T-cell (primary cell): ENCODE measurements at regions of chr1 and their contacts with region 1.

Region 1: GRCh38 chr1:155323798-155324610 is 3.3 kb downstream of the RUSC1 start:
- DNase-seq: peak; percentile 65 to 94 (median 81)
- ATAC-seq: peak; percentile 82 to 84 (median 84)
- H3K4me3 ChIP-seq: peak overlapping the region; percentile 95 to 97
- H3K4me3 Mint-ChIP-seq: peak overlapping the region; percentile 80 to 89 (median 85)
- H3K27ac ChIP-seq: peak overlapping the region; percentile 89
- H3K27ac Mint-ChIP-seq: peak overlapping the region; percentile 76 to 85
- H3K4me1 ChIP-seq: peaks cover 5 to 45% of the 10 kb centered on the region in 2 experiments
- H3K4me1 Mint-ChIP-seq: peaks cover 32 to 39% (median 34%) of the 10 kb centered on the region in 3 donors
- H3K27me3 ChIP-seq: peaks cover 0 to 2% of the 10 kb centered on the region in 2 experiments
- H3K27me3 Mint-ChIP-seq: no peaks in the 10 kb centered on the region

Region 2: DNA sequence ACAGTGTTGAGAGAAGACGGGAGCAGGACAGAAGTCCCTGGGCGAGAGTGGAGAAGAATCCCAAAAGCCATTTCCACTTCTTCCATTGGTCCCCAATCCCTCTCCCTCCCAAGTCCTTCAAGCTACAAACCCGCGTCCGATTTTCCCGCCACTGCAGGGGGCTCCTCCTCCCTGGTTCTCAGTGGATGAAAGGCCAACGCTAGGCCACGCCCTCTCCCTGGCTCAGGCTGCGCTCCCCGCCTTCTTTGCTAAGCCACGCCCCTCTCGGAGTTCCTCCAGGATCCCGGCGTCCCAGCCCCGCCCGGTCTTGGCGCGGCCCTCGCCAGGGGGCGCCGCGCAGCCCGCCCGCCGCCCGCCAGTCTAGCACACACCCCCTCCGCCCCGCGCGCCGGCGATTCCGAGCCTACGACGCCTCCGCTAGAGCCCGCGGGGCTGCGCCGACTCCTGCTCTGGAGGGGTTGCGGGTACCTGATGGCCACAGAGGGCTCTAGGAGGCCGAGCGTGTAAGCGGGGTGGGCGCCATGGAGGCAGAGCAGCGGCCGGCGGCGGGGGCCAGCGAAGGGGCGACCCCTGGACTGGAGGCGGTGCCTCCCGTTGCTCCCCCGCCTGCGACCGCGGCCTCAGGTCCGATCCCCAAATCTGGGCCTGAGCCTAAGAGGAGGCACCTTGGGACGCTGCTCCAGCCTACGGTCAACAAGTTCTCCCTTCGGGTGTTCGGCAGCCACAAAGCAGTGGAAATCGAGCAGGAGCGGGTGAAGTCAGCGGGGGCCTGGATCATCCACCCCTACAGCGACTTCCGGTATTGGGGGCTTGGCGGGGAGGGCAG is 46.7 kb before region 1 on chr1 and contains the start of gene HCN3:
- CTCF ChIA-PET with region 1: interaction called in 1 of 2 experiments, 10 read pairs
- POLR2A ChIA-PET with region 1: no interaction called
- DNase-seq: peak; percentile 50 to 95 (median 70)
- ATAC-seq: peak; percentile 54 to 65 (median 62)
- H3K4me3 ChIP-seq: peak within 1 kb of the TSS; percentile 49 to 68
- H3K4me3 Mint-ChIP-seq: peak within 1 kb of the TSS; percentile 69 to 70 (median 69)
- H3K27ac ChIP-seq: peak within 1 kb of the TSS; percentile 44
- H3K27ac Mint-ChIP-seq: peak within 1 kb of the TSS in 1 of 2 donors; percentile 31
- H3K4me1 ChIP-seq: peaks cover 23 to 41% of the 10 kb centered on the region in 2 experiments
- H3K4me1 Mint-ChIP-seq: peaks cover 32 to 41% (median 35%) of the 10 kb centered on the region in 3 donors
- H3K27me3 ChIP-seq: no peaks in the 10 kb centered on the region
- H3K27me3 Mint-ChIP-seq: no peaks in the 10 kb centered on the region
- total RNA-seq, gene HCN3: 1.7 to 4.1 (median 4.0) TPM